ENCODE measurements at regions of chr9 and their contacts with region 1.

Region 1: DNA sequence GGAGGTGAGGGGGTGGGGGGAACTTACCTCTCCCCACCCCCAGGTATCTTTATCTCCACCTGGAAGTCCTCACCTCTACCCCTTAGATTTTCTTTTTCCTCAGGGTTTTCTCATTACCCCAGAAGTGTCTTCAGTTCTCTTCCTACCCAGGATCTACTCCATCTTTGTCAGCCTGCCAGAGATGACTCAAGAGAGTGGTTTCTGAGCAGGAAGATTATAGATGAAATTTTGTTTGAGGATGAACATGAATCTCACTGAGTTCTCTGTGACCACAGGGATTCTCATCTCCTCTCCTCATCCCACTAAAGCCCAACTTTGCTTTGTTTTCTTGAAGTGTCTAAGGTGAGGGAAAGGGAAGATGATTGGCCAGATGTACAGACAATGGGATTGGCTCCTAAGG is 5.2 kb upstream of the HINT2 start:
- DNase-seq: no peak
- H3K4me3 ChIP-seq: no peak overlapping the region
- H3K27ac ChIP-seq: no peak overlapping the region
- H3K27me3 ChIP-seq: no peaks in the 10 kb centered on the region
- CTCF ChIP-seq: no peak

Region 2: DNA sequence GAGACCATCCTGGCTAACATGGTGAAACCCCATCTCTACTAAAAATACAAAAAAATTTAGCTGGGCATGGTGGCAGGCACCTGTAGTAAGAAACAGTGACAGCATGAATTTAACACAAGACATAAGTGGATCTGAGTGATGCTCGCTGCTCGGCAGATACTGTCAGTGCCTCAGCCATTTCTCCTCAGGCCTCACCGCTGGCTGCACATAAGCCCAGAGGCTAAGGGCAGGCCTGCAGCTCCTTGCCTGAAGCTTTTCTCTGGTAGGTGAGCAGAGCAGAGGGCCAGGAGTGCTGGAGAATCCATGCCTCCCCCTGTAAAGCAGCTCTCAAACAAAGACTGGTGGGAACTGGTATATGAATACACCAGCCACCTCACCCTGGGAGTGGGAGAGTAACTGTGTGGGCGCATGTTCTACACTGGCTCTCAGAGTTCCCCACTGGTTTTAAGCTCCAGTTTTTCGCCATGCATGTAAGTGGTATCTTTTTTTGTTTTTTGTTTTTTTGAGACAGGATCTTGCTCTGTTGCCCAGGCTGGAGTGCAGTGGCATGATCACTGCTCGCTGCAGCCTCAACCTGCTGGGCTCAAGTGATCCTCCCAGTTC is 191.6 kb before region 1 on chr9:
- intact Hi-C with region 1: no loop called
- DNase-seq: no peak
- H3K4me3 ChIP-seq: no peak overlapping the region
- H3K27ac ChIP-seq: no peak overlapping the region
- H3K27me3 ChIP-seq: no peaks in the 10 kb centered on the region
- CTCF ChIP-seq: no peak

Region 3: DNA sequence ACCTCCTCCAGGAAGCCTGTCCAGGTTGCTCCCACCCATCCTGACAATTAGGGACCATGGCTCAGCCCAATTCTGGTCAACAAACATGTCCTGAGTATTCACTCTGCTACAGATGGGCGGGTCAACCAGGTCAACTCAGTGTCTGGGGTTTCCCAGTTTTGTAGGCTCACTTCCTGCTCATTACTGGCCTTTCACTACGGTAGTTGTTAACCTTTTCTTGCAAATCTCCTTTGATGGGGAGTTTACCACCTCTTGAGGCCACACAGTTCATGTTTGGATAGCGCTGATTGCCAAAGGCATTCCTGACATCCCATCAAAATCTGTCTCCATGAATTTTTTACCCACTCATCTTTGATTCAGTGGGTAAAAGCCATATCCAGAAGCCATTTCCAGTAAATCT is 22.7 kb after region 1 on chr9:
- intact Hi-C with region 1: loop called in 1 of 2 experiments (anchors 1 kb)
- DNase-seq: no peak
- H3K4me3 ChIP-seq: no peak overlapping the region
- H3K27ac ChIP-seq: no peak overlapping the region
- H3K27me3 ChIP-seq: no peaks in the 10 kb centered on the region
- CTCF ChIP-seq: no peak

Region 4: DNA sequence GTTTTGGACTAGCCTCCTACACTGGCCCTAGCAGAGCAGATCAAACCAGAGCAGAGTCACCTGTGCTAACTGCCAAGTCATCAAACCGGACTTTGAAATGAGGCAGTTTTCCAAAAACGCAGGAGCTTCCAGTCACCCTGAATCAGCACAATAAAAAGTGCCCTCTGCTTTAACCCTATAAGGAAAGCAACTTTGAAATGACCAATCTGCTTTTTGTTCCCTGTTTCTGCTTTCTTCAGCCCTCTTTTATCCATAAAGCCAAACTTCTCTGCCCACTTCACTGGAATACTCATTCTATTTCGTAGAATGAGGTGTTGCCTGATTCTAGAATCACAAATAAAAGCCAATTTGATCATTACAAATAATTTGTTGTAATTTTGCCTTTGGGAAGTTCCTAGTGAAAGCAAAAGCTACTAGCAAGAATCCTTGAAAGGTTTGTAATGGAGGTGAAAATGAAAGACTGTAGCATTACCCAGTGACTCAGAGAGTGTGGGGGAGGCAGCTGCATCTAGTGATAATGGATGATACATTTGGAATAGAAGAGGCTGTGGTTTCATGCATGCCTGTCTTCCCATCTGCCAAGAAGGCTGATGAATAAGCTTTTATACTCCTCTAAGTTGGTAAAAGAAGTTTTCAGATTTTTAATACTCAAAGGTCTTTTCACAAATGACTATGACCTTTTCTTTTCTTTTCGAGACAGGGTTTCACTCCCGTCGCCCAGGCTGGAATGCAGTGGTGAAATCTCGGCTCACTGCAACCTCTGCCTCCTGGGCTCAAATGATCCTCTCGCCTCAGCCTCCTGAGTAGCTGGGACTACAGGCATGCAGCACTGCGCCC is 104.1 kb after region 1 on chr9:
- intact Hi-C with region 1: no loop called
- DNase-seq: peak in 1 of 10 donors; percentile 70
- H3K4me3 ChIP-seq: peak overlapping the region in 3 of 59 donors; percentile 3 to 20 (median 12)
- H3K27ac ChIP-seq: peak overlapping the region in 47 of 59 donors; percentile 4 to 81 (median 53)
- H3K27me3 ChIP-seq: no peaks in the 10 kb centered on the region
- CTCF ChIP-seq: no peak

Measured in dorsolateral prefrontal cortex (tissue), 120 donors.